HEK293 (cell line): ENCODE measurements at regions of chr5 and their contacts with region 1.

Region 1: GRCh38 chr5:31825518-31826068 is 186.7 kb downstream of the PDZD2 start:
- H3K4me3 ChIP-seq: no peak overlapping the region
- H3K27ac ChIP-seq: no peak overlapping the region
- H3K4me1 ChIP-seq: peaks cover 10% of the 10 kb centered on the region; the same call in 1 of the 2 replicates
- CTCF ChIP-seq: peak; percentile 68

Region 2: GRCh38 chr5:31581498-31582099 is 244.0 kb before region 1 on chr5:
- CTCF ChIA-PET with region 1: interaction called, 11 read pairs
- POLR2A ChIA-PET with region 1: no interaction called
- H3K4me3 ChIP-seq: no peak overlapping the region
- H3K27ac ChIP-seq: no peak overlapping the region
- H3K4me1 ChIP-seq: no peaks in the 10 kb centered on the region
- CTCF ChIP-seq: no peak

Region 3: GRCh38 chr5:32057162-32058096 is 231.8 kb after region 1 on chr5:
- CTCF ChIA-PET with region 1: interaction called, 15 read pairs
- POLR2A ChIA-PET with region 1: no interaction called
- H3K4me3 ChIP-seq: no peak overlapping the region
- H3K27ac ChIP-seq: no peak overlapping the region
- H3K4me1 ChIP-seq: no peaks in the 10 kb centered on the region
- CTCF ChIP-seq: no peak